ENCODE measurements at regions of chr7 and their contacts with region 1.

Region 1: DNA sequence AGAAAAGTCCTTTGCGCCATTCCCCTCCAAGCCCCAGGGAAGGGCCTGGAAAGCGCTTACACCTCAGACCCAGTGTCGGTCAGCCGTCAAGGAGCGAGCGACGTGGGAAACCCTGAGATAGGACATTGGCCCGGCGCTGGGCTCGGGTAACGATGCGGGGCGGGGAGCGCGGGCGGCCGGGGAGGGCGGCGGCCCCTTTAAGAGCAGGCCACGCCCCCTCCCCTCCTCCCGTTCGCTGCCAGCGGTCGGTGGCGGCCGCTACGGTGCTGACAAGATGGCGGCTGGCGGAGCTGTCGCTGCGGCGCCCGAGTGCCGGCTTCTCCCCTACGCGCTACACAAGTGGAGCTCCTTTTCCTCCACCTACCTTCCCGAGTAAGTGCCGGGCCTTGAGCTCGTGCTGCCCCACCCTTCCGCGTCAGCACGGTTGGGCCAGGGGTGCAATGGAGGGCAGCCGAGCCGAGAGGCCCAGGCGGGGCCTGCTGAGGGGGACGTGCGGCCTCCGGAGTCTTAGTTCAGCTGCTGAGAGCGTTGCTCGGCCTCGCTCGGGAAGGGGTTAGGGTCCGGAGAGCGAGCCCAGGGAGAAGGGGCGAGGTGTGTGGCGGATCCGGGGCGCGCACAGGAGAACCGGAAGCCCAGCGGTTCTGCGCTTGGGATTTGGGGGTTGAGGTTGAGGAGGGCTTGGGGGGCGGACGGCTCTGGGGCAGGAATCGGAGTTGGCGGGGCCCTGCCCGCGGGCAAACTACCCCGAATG is at the start of gene MKLN1:
- DNase-seq: peak; percentile 95
- ATAC-seq: peak; percentile 94
- H3K4me3 Mint-ChIP-seq: peak within 1 kb of the TSS; percentile 94
- H3K27ac Mint-ChIP-seq: peak within 1 kb of the TSS; percentile 97
- H3K4me1 Mint-ChIP-seq: peaks cover 60% of the 10 kb centered on the region
- H3K27me3 Mint-ChIP-seq: no peaks in the 10 kb centered on the region
- total RNA-seq, gene MKLN1: 40.1 to 42.9 TPM

Region 2: GRCh38 chr7:130440527-130441365 is 887.1 kb before region 1 on chr7 and contains the start of gene CEP41:
- CTCF ChIA-PET with region 1: no interaction called
- POLR2A ChIA-PET with region 1: no interaction called
- intact Hi-C with region 1: loop called in 1 of 2 experiments (anchors 5 kb)
- DNase-seq: peak; percentile 97
- ATAC-seq: peak; percentile 96
- H3K4me3 Mint-ChIP-seq: peak within 1 kb of the TSS; percentile 95
- H3K27ac Mint-ChIP-seq: peak within 1 kb of the TSS; percentile 99
- H3K4me1 Mint-ChIP-seq: peaks cover 49% of the 10 kb centered on the region
- H3K27me3 Mint-ChIP-seq: no peaks in the 10 kb centered on the region
- total RNA-seq, gene CEP41: 19.7 to 21.2 TPM

Region 3: DNA sequence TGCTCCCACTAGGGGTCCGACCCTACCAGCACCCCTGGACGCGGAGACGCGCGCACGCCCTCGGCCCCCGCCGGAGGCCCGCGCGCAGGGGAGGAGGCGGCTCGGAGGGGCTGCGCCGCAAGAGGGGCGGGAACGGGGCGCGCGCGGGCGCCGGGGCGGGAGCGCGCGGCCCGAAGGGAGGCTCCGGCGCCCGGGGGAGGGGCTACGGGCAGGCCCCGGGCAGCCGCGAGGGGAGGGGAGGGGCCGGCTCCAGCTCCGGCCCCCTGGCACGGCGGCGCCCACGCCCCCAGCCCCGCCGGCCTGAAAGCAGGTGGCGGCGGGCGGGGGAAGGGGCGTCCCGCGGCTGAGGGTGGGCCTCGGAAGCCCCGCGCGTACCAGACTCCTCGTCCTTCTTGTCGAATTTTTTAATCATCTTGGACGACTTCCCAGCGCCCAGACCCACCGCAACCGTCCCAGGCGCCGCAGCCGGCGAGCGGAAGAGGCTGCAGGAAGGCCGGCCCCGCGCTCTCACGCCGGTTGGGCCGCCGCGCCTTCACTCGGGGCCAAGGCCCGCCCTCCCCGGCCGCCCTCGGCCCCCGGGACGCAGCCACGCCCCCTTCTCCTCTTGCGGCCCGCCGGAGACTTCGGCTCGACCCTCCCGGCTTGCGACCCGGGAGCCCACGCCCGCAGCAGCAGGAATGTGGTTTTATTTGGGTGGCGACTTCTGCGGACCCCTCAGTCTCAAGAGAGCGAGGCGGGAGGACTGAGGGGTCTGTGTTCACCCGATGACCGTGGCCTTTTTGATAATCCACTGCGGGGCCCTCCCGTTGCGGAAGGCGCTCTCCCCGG is 659.3 kb before region 1 on chr7 and contains the start of gene COPG2:
- CTCF ChIA-PET with region 1: no interaction called
- POLR2A ChIA-PET with region 1: no interaction called
- intact Hi-C with region 1: loop called in 1 of 2 experiments (anchors 2 kb)
- DNase-seq: peak; percentile 86
- ATAC-seq: peak; percentile 97
- H3K4me3 Mint-ChIP-seq: peak within 1 kb of the TSS; percentile 81
- H3K27ac Mint-ChIP-seq: peak within 1 kb of the TSS; percentile 70
- H3K4me1 Mint-ChIP-seq: peaks cover 16% of the 10 kb centered on the region
- H3K27me3 Mint-ChIP-seq: peaks cover 5% of the 10 kb centered on the region
- total RNA-seq, gene COPG2: 23.5 to 25.9 TPM

Region 4: DNA sequence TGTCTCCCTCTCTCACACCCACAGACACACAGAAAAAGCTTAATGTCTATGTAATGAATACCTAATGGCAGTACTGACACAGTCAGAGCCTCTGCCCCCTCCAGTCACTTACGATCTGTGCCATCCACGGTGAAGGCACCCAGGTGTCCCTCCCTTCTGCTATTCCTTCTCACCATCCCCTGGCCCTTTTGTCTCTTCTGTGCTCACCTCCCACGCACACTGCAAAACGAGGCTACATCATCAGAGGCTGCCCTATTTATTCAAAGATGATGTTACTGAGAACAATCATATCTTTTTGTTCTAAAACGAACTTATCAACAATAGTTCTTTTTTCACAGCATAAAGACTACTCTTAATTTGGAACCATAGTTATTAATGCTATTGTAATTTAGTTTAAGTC is 247.0 kb before region 1 on chr7:
- CTCF ChIA-PET with region 1: no interaction called
- POLR2A ChIA-PET with region 1: no interaction called
- intact Hi-C with region 1: no loop called
- DNase-seq: no peak
- ATAC-seq: no peak
- H3K4me3 Mint-ChIP-seq: no peak overlapping the region
- H3K27ac Mint-ChIP-seq: no peak overlapping the region
- H3K4me1 Mint-ChIP-seq: peaks cover 45% of the 10 kb centered on the region
- H3K27me3 Mint-ChIP-seq: no peaks in the 10 kb centered on the region

Region 5: DNA sequence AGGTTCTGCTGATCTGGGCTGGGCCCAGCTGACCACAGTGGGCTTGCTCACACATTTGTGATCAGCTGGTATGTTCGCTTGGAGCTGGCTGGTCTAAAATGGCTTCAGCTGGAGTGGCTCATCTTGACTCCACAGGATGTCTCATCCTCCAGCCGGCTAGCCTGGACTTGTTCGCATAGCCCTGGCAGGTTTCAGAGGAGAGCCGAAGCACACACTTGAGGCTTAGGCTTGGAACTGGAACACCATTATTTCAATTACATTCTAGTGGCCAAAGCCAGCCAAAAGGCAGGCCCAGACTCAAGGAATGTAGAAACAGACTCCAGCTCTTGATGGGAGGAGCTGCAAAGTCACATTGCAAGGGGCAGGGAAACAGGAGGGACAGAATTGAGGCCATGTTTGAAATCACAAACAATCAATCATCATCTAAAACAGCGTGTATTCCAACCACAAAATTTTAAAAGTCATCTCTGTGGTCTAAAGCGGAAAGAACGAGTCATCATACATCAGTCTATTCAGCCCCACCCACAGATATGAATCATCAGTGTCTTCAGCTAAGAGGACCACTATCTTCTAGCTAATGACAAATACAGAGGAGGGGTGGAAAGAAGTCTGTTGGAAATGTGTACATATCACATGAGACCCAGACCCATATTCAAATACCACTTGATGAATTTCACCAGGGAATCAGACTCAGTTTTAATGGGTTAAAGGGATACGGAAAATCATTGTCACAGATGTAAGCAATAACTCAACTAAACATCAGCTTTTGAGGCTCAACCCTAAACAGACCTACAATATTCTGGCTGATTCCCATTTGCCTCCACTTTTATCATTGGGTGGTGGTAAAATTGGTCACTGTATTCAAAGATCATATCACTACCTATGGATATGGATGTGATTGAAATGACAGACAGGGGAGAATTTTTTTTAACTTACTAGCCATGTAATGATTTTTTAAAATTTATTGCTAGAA is 139.1 kb before region 1 on chr7:
- CTCF ChIA-PET with region 1: interaction called, 3 read pairs
- POLR2A ChIA-PET with region 1: no interaction called
- intact Hi-C with region 1: loop called (anchors 1 to 2 kb)
- DNase-seq: peak; percentile 65
- ATAC-seq: peak; percentile 84
- H3K4me3 Mint-ChIP-seq: peak overlapping the region; percentile 58
- H3K27ac Mint-ChIP-seq: peak overlapping the region; percentile 96
- H3K4me1 Mint-ChIP-seq: peaks cover 55% of the 10 kb centered on the region
- H3K27me3 Mint-ChIP-seq: no peaks in the 10 kb centered on the region

Region 6: DNA sequence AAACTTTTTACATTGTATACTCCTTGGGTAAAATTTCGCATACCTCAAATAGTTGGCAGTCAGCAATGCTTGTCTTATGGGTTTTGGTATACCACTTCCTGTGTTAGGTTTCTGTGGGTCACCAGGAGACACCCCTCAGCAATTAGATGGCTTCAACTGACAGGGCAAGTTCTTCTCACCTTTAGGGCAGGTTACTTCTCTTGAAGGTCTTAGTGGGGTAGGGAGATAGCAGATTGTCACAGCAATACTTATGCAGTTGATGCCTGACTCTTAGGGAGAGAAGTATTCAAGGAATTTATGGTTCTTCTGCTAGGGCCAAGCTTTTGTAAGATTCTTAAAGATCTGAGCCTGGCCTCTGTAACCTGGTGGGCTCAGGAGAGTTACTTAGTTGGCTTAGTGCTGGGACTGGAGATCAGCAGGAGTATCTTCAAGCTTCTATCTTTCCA is 42.7 kb after region 1 on chr7:
- CTCF ChIA-PET with region 1: no interaction called
- POLR2A ChIA-PET with region 1: no interaction called
- intact Hi-C with region 1: loop called in 1 of 2 experiments (anchors 2 kb)
- DNase-seq: peak; percentile 30
- ATAC-seq: peak; percentile 64
- H3K4me3 Mint-ChIP-seq: no peak overlapping the region
- H3K27ac Mint-ChIP-seq: no peak overlapping the region
- H3K4me1 Mint-ChIP-seq: peaks cover 70% of the 10 kb centered on the region
- H3K27me3 Mint-ChIP-seq: no peaks in the 10 kb centered on the region